OCI-LY7 (cell line): ENCODE measurements at regions of chr5 and their contacts with region 1.

Region 1: GRCh38 chr5:151126199-151126645 is 31.4 kb downstream of the ANXA6 start:
- DNase-seq: peak; percentile 83
- H3K4me3 ChIP-seq: no peak overlapping the region
- H3K27ac ChIP-seq: peak overlapping the region; percentile 86
- H3K4me1 ChIP-seq: peaks cover 91% of the 10 kb centered on the region
- CTCF ChIP-seq: peak; percentile 94

Region 2: GRCh38 chr5:151115274-151115905 is 10.8 kb before region 1 on chr5:
- CTCF ChIA-PET with region 1: interaction called, 10 read pairs
- POLR2A ChIA-PET with region 1: interaction called, 9 read pairs
- intact Hi-C with region 1: no loop called
- DNase-seq: peak; percentile 72
- H3K4me3 ChIP-seq: no peak overlapping the region
- H3K27ac ChIP-seq: no peak overlapping the region
- H3K4me1 ChIP-seq: peaks cover 9% of the 10 kb centered on the region
- CTCF ChIP-seq: peak; percentile 99

Region 3: DNA sequence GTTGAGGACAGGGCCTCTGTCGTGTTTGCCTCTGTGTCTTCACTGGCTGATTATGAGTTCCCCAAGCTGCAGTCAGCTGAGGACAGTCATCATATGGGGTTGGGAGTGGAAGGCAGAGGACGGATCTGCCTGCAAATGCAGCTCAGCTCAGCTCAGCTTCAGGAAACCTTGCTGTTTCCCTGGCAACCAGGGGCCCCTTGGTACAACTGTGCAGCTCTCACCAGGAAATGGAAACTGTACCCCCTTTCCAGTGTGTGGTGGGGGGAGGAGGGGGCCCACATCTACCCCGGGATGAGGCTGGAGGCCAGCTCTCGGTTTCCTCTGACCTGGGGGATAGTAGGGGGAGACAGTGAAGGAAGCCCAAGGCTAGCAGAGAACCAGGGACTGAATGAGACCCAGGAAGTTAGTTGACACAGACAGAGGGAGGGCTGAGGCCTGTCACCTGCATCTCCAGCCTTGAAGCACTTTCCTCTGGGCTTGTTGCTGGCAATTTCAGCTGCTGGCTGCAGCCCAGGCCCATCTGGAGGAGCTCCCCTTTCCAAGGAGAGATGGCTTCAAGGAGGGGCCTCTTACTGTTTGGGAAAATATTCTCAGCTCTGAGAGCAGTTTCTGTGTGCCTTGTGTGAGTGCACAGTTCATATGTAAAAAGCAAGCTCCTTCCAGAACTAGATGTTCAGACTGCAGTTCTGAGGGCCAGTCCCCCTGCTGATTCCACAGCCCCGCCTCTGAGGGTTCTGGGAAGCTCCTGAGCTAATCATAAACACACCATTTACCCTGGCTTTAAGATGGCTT is 24.4 kb after region 1 on chr5:
- CTCF ChIA-PET with region 1: interaction called, 15 read pairs
- POLR2A ChIA-PET with region 1: interaction called, 83 read pairs
- intact Hi-C with region 1: no loop called
- DNase-seq: peak; percentile 81
- H3K4me3 ChIP-seq: peak overlapping the region; percentile 31
- H3K27ac ChIP-seq: peak overlapping the region; percentile 90
- H3K4me1 ChIP-seq: peaks cover 79% of the 10 kb centered on the region
- CTCF ChIP-seq: no peak

Region 4: DNA sequence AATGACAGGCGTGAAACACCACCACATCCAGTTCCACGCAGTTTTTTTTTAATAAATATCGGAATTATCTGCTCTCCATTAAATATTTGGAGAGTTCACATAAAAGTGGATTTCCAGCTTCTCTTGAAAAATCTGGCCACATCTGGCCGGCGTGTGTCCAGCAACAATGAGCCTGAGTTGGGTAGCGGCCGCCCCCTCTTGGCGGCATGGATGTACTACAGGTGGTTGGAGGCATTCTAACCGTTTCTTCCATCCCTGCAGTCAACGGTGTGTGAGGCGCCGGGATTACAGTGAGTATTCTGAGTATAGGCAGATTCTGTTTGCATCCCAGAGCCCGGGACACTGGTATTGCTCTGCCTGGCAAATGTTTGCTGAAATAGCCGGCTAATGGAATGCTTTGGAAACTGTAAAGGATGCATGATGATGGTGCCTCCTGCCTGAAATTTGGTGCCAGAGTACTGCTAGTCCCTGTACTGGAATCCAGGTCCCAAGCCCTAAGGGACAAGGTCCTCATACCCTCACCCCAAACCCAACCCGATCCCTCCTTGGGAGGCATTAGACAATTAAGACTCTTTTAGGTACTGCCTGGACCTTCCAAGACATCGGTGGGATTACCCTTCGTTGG is 113.1 kb after region 1 on chr5:
- CTCF ChIA-PET with region 1: interaction called, 17 read pairs
- POLR2A ChIA-PET with region 1: interaction called, 9 read pairs
- intact Hi-C with region 1: loop called (anchors 1 kb)
- DNase-seq: peak; percentile 81
- H3K4me3 ChIP-seq: peak overlapping the region; percentile 49
- H3K27ac ChIP-seq: peak overlapping the region; percentile 72
- H3K4me1 ChIP-seq: peaks cover 79% of the 10 kb centered on the region
- CTCF ChIP-seq: peak; percentile 99